Dendritic cell treated with granulocyte-macrophage colony-stimulating factor and Interleukin-4, amounts not matched to agents 40 ng/mL and 50 ng/mL, for 4 days (primary cell): ENCODE measurements at regions of chr14 and their contacts with region 1.

Region 1: GRCh38 chr14:105682940-105683570 is 156.7 kb downstream of the TMEM121 start:
- H3K4me3 Mint-ChIP-seq: no peak overlapping the region
- H3K27ac Mint-ChIP-seq: no peak overlapping the region
- H3K4me1 Mint-ChIP-seq: no peaks in the 10 kb centered on the region
- H3K27me3 Mint-ChIP-seq: peaks cover 8% of the 10 kb centered on the region

Region 2: DNA sequence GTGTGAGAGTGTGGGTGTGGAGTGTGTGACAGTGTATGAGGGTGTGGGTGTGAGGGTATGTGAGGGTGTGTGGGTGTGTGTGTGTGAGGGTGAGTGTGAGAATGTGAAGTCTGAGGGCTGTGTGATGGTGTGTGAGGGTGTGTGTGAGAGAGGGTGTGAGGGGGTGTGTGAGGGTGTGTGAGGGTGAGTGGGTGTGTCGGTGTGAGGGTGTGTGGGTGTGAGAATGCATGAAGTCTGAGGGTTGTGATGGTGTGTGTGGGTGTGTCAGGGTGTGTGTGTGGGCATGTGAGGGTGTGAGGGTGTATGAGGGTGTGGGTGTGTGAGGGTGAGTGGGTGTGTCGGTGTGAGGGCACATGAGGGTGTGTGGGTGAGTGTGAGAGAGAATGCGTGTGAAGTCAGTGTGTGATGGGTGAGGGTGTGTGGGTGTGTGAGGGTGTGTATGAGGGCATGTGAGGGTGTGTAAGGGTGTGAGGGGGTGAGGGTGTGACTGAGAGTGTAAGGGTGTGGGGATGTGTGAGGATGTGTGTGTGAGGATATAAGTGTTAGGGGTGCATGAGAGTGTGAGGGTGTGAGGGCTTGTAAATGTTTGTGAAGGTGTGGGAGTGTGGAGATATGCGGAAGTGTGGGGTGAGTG is 120.2 kb before region 1 on chr14:
- intact Hi-C with region 1: loop called (anchors 10 kb)
- H3K4me3 Mint-ChIP-seq: no peak overlapping the region
- H3K27ac Mint-ChIP-seq: no peak overlapping the region
- H3K4me1 Mint-ChIP-seq: no peaks in the 10 kb centered on the region
- H3K27me3 Mint-ChIP-seq: peaks cover 1% of the 10 kb centered on the region

Region 3: DNA sequence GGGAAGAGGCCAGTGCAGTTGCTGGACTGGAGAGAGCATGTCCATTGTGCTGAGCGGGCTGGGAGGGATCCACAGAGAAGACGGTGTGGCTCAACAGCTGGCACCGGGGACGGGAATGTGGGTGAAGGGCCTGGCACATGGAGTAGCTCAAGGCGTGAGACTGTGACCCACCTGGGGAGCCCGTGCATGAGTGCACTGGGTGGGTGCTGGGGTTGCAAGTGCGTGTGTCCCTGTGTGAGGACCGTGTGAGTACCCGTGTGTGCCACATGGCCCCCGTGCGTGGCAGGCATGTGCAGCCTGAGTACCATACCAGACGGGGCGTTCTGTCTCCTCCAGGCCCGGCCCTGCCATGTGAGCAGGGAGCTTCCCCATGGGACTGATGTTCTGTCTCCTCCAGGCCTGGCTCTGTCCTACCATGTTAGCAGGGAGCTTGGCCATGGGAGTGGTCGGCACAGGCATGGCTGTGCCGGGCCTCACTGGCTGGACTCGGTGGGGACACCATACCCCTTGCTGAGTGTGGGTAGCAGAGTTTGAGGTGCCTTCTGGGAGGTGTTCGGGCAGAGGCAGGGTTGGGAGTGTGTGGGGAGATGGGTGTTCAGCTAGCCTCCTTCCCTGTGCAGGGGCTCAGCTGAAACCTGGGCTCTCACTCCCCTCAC is 77.8 kb after region 1 on chr14:
- intact Hi-C with region 1: no loop called
- H3K4me3 Mint-ChIP-seq: no peak overlapping the region
- H3K27ac Mint-ChIP-seq: no peak overlapping the region
- H3K4me1 Mint-ChIP-seq: no peaks in the 10 kb centered on the region
- H3K27me3 Mint-ChIP-seq: no peaks in the 10 kb centered on the region

Region 4: DNA sequence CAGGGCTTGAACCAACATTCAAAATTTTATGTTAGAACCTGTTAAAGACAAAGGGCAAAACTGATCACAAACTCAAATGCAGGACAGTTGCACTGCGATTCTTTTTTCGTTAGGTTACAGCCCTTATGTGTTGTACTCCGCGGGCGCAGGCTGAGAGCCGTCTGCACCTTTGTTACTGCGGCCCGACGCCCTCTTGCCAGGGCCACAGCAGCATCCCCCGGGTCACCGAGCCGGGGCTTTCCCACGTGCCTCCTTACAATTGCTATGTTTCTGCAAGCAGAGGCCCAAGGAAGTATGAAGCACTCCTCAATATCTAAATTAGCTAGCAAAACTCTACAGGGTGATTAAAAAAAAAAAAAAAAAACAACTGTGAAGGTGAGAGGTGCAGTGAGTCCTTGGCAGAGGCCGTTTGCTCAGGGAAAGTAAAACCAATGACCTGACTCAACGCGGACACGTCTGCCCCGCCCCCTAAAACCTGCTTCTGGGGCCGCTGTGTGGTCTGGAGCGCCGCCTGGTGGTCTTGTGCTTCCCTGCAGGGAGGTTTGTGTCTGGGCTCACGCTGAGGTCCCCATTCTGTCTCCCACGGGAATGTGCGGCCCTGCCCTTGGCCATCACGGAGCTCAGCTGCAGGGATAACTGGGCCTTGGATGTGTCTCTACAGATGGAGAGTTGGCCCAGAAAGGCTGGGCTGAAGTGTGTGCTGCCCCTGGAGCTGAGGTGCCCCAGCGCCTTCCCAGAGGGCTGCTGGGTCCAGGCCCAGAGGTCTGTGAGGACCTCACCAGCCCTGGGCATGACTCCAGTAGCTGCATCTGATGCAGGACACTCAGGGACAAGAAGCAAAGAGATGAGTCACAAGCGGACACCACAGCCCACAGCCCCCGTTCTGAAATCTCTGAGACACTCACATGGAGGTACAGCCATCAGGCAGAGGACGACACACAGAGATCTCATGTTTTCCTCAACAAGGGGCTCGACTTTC is 261.9 kb after region 1 on chr14:
- intact Hi-C with region 1: loop called (anchors 10 kb)
- H3K4me3 Mint-ChIP-seq: no peak overlapping the region
- H3K27ac Mint-ChIP-seq: peak overlapping the region; percentile 27
- H3K4me1 Mint-ChIP-seq: peaks cover 44% of the 10 kb centered on the region
- H3K27me3 Mint-ChIP-seq: peaks cover 7% of the 10 kb centered on the region

Region 5: GRCh38 chr14:105999361-106000028 is 316.4 kb after region 1 on chr14:
- intact Hi-C with region 1: loop called (anchors 10 kb)
- H3K4me3 Mint-ChIP-seq: no peak overlapping the region
- H3K27ac Mint-ChIP-seq: no peak overlapping the region
- H3K4me1 Mint-ChIP-seq: peaks cover 14% of the 10 kb centered on the region
- H3K27me3 Mint-ChIP-seq: no peaks in the 10 kb centered on the region